Activated CD8-positive, alpha-beta memory T cell treated with anti-CD3 and anti-CD28 coated beads, Interleukin-2, amount 10 ng/mL, durations not matched to agents 7 days and 5 days (primary cell): ENCODE measurements at regions of chr17 and their contacts with region 1.

Region 1: DNA sequence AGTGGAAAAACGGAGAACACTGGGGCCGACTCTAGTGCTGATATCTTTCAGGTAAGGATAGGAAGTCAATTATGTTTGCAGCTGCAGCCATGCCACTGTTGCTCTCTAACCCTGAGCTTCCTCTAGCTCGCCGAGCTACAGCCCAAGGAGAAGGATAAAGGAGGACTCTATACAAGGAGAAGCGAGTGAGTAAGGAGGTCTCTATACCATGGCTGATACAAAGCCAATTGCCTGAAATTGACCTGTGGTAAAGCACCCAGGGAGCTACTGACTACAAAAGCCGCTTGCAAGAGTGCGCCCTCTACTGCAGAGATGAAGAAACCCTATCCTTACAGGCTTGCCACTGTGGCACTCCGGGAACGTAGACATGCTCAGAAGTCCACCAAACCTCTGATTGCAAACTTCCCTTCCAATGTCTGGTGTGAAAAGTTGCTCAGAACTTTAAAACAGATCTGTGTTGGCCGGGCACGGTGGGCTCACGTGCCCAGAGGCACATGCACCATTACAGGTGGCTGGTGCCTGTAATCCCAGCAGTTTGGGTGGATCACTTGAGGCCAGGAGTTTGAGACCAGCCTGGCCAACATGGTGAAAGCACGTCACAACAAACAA is 10.8 kb upstream of the SLC46A1 start:
- DNase-seq: peak; percentile 74
- ATAC-seq: peak; percentile 98
- H3K4me3 Mint-ChIP-seq: no peak overlapping the region
- H3K27ac Mint-ChIP-seq: no peak overlapping the region
- H3K4me1 Mint-ChIP-seq: peaks cover 9% of the 10 kb centered on the region
- H3K27me3 Mint-ChIP-seq: peaks cover 17% of the 10 kb centered on the region

Region 2: DNA sequence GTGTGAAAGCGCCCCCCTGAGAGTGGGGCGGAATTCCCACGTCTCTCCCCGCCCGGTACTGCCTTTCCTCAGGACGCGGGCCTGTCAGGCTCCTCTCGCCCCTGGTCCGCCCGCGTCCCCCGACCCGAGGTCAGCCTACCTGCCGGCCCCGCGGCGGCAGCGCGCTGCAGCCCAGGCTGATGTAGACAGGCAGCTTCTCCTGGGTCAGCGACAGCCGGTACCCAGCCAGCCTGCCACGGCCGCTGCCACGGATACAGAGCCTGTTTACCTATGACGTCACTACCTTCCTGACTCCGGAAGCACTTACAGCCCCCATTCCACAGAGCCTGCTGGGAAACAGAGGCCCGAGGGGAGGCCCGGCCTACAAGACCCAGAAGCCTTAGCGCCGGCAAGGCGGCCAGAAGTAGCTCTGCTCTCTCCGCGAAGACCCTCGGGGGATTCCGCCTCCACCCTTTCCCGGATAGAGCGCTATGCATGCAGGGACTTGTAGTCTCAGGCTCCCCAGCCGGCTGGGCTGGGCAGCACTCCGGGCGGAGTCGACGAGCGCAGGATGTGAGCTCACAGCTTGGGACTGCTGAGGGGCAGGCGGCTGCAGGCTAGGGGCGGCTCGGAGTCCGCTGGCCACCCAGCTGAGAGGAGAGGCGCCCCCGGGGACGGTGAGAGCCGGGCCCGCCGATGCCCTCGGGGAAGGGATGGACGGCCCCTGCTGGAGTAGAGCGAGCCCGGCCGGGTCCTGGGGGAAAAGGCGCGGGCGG is 81.4 kb before region 1 on chr17 and contains the starts of genes IFT20 and TNFAIP1:
- CTCF ChIA-PET with region 1: interaction called, 10 read pairs
- DNase-seq: peak; percentile 100
- ATAC-seq: peak; percentile 96
- H3K4me3 Mint-ChIP-seq: peak within 1 kb of the TSS; percentile 97
- H3K27ac Mint-ChIP-seq: peak within 1 kb of the TSS; percentile 92
- H3K4me1 Mint-ChIP-seq: peaks cover 36% of the 10 kb centered on the region
- H3K27me3 Mint-ChIP-seq: no peaks in the 10 kb centered on the region
- total RNA-seq, gene IFT20: 20.2 to 22.8 TPM
- total RNA-seq, gene TNFAIP1: 19.5 to 22.2 TPM

Region 3: DNA sequence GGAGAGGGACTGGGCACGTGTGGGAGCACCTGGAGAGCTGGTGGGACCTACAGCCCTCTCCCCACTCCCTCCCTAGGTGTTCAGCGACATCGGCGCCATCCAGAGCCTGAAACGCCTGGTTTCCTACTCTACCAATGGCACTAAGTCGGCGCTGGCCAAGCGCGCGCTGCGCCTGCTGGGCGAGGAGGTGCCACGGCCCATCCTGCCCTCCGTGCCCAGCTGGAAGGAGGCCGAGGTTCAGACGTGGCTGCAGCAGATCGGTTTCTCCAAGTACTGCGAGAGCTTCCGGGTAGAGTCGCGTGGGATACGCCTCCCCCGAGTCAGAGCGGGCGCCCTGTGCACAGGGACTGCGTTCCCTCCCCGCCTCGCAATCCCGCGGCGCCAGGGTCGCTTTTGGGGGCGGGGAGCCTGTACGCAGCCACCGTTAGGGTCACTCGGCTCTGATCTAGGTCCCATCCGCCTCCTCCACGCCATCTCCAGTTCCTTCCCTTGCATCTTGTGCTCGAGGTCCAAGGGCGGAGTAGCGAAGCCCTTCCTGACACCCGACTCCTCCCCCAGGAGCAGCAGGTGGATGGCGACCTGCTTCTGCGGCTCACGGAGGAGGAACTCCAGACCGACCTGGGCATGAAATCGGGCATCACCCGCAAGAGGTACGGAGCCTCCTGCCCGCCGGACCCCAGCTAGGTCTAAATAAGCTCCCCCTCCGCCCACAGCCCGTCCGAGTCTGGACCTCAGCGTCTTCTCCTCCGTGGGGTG is 32.3 kb before region 1 on chr17:
- CTCF ChIA-PET with region 1: interaction called, 17 read pairs
- DNase-seq: peak; percentile 88
- ATAC-seq: peak; percentile 97
- H3K4me3 Mint-ChIP-seq: peak overlapping the region; percentile 87
- H3K27ac Mint-ChIP-seq: peak overlapping the region; percentile 77
- H3K4me1 Mint-ChIP-seq: peaks cover 22% of the 10 kb centered on the region
- H3K27me3 Mint-ChIP-seq: no peaks in the 10 kb centered on the region

Region 4: DNA sequence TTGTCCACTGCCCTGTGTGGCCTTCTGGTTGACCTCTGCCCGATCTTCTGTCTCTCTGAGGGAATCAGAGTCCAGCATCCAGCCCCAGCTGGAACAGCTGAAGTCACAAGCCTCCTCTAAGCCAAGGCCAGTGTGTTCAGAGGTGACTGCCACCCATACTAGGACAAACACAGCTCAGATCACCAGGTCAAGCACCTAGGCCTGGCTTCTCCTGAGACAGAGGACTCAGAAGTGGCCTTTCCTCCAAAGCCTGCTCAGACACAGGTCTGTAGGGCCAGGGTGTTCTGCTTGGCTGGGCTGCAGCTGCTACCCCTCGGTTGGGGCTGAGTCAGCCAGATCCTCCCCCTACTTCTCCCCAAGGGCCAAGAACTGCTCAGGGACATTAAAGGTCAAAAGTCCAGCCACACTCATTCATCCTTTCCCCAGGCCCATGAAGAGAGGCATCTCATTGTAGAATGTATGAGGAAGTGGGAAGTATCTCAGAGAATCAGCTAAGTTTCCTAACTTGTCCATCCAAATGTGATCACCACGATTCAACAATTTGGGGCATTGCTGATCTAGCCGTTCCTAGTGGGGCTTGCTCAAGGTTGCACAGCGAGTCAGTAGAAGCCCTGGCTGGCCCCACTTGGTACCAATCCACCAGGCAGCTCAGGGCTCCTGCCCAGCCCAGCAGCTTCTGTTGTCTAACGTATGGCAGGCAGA is 18.4 kb before region 1 on chr17:
- CTCF ChIA-PET with region 1: interaction called, 18 read pairs
- DNase-seq: no peak
- ATAC-seq: no peak
- H3K4me3 Mint-ChIP-seq: no peak overlapping the region
- H3K27ac Mint-ChIP-seq: no peak overlapping the region
- H3K4me1 Mint-ChIP-seq: peaks cover 24% of the 10 kb centered on the region
- H3K27me3 Mint-ChIP-seq: no peaks in the 10 kb centered on the region

Region 5: DNA sequence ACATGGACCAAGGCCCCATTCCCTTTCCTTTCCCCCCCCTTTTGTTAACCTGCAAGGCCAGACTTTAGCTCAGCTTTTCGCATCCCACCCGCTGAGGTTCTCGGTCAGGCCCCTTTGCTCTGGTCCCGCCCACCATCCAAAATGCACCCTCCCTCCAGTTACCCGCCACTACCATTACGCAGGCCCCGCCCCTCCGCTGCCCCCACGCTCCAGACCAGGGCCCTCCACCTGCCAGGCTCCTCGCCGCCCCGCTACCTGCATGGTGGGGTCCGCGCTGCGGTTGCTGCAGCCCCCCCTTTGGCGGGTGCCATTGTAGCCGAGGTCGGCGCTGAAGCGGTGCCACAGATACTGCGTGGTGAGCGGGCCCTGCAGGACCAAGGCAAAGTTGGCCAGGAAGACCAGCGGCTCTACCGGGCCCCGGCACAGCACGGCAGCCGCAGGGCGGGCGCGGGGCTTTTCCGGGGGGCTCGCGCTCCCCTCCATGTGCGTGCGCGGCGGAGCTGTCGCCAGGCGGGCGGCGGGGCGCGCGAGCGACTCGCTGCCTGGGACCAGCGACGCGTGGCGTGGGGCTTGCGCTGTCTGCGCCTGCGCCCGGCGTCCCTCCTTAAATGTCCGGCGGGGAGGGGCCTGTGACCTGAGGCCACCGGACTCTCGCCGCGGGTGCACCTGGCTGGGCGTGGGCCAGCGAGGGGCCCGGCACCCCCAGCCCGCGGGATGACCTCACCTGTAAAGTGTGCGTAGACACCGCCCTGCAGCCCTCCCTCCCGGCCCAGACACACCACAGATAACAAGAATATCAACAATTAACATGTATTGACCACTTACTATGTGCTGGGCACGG is 11.0 kb before region 1 on chr17 and contains the start of gene SLC46A1:
- CTCF ChIA-PET with region 1: interaction called, 21 read pairs
- DNase-seq: peak; percentile 71
- ATAC-seq: peak; percentile 88
- H3K4me3 Mint-ChIP-seq: peak within 1 kb of the TSS; percentile 68
- H3K27ac Mint-ChIP-seq: peak within 1 kb of the TSS; percentile 35
- H3K4me1 Mint-ChIP-seq: peaks cover 18% of the 10 kb centered on the region
- H3K27me3 Mint-ChIP-seq: peaks cover 12% of the 10 kb centered on the region
- total RNA-seq, gene SLC46A1: 3.0 to 5.3 TPM

Region 6: DNA sequence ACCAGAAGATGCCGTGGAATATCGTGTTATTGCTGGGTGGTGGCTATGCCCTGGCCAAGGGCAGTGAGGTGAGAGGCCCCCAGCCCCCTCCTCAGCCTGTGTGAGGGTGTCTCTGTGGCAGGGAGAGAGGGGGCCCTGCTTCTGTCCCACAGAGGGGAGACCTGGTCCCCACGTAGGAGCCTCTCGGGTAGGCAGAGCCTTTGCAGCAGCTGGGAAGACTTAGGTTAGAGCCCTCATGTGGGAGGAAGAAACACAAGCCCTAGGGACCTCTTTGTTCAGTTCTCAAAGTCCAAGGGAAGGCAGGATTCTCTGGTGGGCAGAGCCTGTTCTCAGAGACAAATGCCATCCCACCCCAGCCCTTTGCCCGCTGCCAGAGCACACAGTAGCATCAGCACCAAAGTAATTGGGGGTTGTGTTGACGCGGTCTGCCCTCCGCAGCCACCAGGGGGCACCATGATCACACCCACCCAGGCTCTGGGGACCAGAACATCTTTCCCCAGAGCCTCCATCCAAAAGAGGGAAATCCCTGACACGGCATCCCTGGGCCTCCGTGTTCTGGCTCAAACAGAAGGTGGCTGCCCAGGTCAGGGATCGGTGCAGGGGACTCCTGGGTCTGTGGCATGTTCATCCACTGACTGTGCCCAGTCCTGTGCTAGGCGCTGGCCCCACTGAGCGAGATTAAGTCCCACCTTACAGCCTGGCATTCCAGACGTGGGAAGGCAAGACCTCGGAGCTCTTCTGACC is 77.8 kb after region 1 on chr17:
- CTCF ChIA-PET with region 1: no interaction called
- DNase-seq: peak; percentile 79
- ATAC-seq: peak; percentile 93
- H3K4me3 Mint-ChIP-seq: no peak overlapping the region
- H3K27ac Mint-ChIP-seq: no peak overlapping the region
- H3K4me1 Mint-ChIP-seq: no peaks in the 10 kb centered on the region
- H3K27me3 Mint-ChIP-seq: peaks cover 7% of the 10 kb centered on the region

Region 7: DNA sequence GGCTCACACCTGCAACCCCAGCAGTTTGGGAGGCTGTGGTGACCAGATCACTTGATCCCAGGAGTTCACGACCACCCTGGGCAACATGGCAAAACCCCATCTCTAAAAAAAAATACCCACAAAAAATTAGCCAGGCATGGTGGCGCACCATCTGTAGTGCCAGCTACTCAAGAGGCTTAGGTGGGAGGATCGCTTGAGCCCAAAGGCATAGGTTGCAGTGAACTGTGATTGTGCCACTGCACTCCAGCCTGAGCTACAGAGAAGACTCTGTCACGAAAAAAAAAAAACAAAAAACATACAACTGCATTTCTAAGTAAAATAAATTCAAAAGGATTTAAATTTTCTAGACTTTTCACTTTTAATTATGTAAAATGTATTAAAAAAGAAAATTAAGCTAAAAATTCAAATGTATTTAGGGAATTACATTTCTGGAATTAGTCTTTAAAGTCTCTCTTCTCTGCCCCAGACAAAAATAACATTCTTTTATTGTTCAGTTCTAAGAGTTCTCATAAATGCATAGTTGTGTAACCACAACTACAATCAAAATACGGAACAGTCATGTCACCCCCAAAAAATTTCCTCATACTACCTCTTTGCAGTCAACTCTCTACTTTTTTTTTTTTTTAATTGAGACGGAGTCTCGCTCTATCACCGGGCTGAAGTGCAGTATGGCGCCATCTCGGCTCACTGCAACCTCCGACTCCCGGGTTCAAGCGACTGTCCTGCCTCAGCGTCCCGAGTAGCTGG is 411.7 kb after region 1 on chr17:
- CTCF ChIA-PET with region 1: no interaction called
- DNase-seq: no peak
- ATAC-seq: no peak
- H3K4me3 Mint-ChIP-seq: no peak overlapping the region
- H3K27ac Mint-ChIP-seq: no peak overlapping the region
- H3K4me1 Mint-ChIP-seq: peaks cover 3% of the 10 kb centered on the region
- H3K27me3 Mint-ChIP-seq: no peaks in the 10 kb centered on the region